Right ventricle myocardium inferior (tissue), 1 donor: ENCODE measurements at regions of chr11 and their contacts with region 1.

Region 1: DNA sequence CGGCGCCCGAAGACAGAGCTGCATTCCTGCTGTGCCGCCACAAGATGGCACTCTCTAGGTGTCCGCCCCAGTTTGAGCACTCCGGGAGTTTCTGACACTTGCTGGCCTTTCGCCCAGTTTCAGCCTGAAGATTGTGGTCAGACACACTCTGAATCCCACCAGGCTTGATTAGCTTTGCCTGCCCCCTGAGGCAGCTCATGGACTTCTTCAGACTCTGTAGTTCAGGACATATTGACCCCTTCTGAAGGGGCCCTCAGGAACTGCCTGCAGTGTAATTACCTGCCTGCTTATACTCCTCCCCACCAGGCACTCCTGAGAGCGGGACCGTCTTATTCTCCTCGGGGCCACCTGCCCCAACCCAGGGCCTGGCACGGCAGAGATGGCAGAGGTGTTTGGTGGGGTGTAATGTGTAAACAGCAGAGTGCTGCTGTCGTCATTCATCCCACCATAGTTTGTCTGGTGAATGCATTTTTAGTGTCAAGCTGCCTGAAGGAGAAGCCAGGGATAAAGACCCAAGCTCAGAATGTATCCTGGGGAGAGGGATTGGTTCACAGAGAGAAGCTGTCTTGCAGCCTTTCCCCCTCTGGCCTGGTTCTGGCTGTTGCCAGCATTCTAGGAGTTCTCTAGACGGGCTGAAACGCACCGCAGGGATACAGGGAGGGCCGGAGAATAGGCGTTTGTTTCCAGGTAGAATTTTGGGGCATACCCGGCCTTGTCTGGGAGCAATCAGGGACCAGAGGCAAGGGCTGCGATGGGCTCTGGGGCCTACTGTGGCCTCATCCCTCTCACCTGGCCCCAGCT is 46.4 kb downstream of the EIF3F start:
- DNase-seq: peak; percentile 86
- ATAC-seq: peak; percentile 58

Region 2: GRCh38 chr11:7892840-7893254 is 140.7 kb before region 1 on chr11:
- intact Hi-C with region 1: no loop called
- DNase-seq: no peak
- ATAC-seq: no peak

Region 3: DNA sequence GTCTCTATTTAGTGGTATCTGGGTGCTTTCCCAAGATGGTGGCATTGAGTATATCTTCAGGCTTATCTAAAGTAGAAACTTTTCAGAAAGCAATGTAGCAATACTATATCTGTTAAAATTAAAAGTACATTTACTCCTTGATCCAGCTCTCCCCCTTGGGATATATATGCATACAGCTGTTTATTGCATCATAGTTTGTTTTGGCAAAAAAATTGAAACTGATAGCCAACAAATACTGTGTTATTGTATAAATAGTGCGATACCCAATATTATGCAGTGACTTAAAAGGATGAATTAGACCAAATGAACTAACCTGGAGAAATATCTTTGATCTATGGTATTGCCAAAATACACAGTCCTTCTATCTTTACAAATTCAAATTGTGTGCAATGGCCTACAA is 83.6 kb before region 1 on chr11:
- intact Hi-C with region 1: no loop called
- DNase-seq: no peak
- ATAC-seq: no peak

Region 4: GRCh38 chr11:8060801-8061554 is 27.5 kb after region 1 on chr11:
- intact Hi-C with region 1: loop called (anchors 2 kb)
- DNase-seq: no peak
- ATAC-seq: no peak

Region 5: DNA sequence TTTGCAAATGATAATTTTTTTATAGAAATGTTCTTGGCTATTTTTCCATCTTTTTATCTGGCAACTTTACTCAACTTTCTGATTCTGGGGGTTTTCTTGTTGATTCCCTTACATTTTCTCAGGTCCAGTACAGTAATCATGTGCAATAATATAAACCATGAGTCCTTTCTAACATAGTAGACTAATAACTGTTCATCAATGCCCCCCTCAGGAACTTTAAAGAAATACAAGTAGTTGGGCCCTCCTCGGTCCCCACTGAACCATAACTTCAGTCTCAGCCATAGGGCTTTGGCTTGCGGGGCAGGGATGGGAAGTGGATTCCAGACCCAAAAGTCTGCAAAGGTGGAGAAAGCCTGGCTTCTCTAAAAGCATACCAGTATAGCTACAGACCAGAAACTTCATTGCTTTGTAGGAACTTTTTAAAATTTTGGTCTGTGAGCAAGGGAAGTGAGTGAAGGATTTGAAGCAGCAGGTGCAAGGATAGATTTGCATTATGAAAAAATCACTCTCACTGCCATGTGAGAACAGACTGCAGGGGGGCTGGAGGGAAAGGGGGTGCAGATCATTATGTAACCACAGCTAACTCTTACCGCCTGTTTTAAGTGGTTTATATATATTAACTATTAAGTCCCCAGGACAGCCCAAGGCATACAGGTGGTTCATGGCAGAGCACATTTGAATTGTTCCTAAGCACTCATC is 37.1 kb after region 1 on chr11:
- intact Hi-C with region 1: loop called (anchors 1 kb)
- DNase-seq: no peak
- ATAC-seq: peak; percentile 44

Region 6: GRCh38 chr11:8087185-8087584 is 53.7 kb after region 1 on chr11:
- intact Hi-C with region 1: loop called (anchors 5 kb)
- DNase-seq: no peak
- ATAC-seq: no peak